Thyroid gland (tissue), 4 donors: ENCODE measurements at regions of chrX and their contacts with region 1.

Region 1: DNA sequence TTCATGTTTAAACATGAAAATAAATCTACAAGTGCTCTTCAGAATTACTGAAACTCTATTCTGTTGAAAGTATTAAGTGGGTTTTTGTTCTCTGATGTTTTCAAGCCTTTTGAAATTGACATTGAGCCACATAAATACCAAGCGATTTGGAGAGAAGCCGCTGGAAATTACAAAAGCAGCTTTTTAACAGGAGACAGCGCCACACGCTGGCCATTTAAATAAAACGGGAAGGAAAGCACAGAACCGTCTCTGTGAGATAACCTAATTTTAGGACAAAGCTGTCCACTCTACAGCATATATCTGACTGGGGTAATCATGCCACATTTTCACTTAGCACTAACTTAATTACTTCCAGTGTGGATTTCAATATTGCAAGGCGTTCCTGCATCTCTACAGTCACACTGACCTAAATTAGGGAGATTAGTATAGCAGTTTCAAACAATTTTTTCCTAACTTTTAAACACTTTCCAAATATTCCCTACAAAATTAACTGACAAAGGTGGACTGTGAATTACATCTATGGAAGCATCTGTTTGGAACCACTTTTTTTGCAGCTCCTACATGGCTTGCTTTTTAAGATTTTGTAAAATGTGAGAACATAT is 6.8 kb upstream of the ANOS1 start:
- DNase-seq: peak; percentile 50 to 63
- H3K4me3 ChIP-seq: no peak overlapping the region
- H3K27ac ChIP-seq: no peak overlapping the region
- H3K4me1 ChIP-seq: no peaks in the 10 kb centered on the region
- H3K27me3 ChIP-seq: no peaks in the 10 kb centered on the region
- CTCF ChIP-seq: peak in 5 of 6 experiments; percentile 21 to 66 (median 48)
- POLR2A ChIP-seq: no peak

Region 2: DNA sequence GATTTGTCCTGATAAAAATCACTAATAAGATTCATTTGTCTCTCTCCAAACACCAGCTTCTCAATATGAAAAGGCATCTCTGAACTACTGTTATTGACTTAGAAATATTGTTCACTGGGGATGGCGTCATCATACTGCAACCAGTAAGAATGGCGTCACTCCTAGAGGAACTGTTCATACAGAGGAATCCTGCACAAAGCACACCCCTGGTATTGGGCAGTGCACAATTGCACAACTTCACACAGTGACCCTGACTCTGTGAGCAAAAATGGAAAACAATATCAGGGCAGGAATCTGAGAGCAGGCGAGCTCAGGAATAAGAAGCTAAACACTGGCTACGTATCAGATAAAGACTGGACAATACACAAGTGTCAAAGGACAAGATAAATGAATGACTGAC is 744.8 kb before region 1 on chrX:
- intact Hi-C with region 1: loop called (anchors 5 kb)
- DNase-seq: no peak
- H3K4me3 ChIP-seq: no peak overlapping the region
- H3K27ac ChIP-seq: no peak overlapping the region
- H3K4me1 ChIP-seq: peaks cover 9 to 10% of the 10 kb centered on the region in 2 donors
- H3K27me3 ChIP-seq: no peaks in the 10 kb centered on the region
- CTCF ChIP-seq: no peak
- POLR2A ChIP-seq: no peak

Region 3: GRCh38 chrX:8579602-8580001 is 159.1 kb before region 1 on chrX:
- intact Hi-C with region 1: no loop called
- DNase-seq: no peak
- H3K4me3 ChIP-seq: no peak overlapping the region
- H3K27ac ChIP-seq: no peak overlapping the region
- H3K4me1 ChIP-seq: no peaks in the 10 kb centered on the region
- H3K27me3 ChIP-seq: no peaks in the 10 kb centered on the region
- CTCF ChIP-seq: no peak
- POLR2A ChIP-seq: no peak

Region 4: GRCh38 chrX:8879750-8880149 is 141.1 kb after region 1 on chrX:
- intact Hi-C with region 1: no loop called
- DNase-seq: peak; percentile 14 to 37
- H3K4me3 ChIP-seq: no peak overlapping the region
- H3K27ac ChIP-seq: no peak overlapping the region
- H3K4me1 ChIP-seq: no peaks in the 10 kb centered on the region
- H3K27me3 ChIP-seq: no peaks in the 10 kb centered on the region
- CTCF ChIP-seq: peak in 4 of 6 experiments; percentile 15 to 51 (median 39)
- POLR2A ChIP-seq: no peak

Region 5: GRCh38 chrX:8988446-8988845 is 249.8 kb after region 1 on chrX:
- intact Hi-C with region 1: no loop called
- DNase-seq: peak; percentile 3 to 10
- H3K4me3 ChIP-seq: no peak overlapping the region
- H3K27ac ChIP-seq: no peak overlapping the region
- H3K4me1 ChIP-seq: no peaks in the 10 kb centered on the region
- H3K27me3 ChIP-seq: no peaks in the 10 kb centered on the region
- CTCF ChIP-seq: no peak
- POLR2A ChIP-seq: no peak

Region 6: DNA sequence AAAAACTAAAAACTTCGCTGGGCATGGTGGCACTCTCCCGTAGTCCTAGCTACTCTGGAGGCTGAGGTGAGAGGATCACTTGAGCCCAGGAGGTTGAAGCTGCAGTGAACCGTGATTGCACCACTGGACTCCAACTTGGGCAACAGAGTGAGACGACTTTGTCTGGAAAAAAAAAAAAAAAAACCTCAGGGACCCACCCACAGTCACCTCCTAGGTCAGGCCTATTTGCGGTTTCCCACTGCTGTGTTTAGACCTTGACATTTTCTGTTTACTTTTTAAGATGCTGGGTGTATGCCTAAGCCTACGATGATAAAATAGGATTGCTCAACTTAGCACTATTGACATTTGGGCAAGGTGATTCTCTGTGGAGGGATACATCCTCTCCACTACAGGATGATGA is 528.7 kb after region 1 on chrX:
- intact Hi-C with region 1: no loop called
- DNase-seq: no peak
- H3K4me3 ChIP-seq: no peak overlapping the region
- H3K27ac ChIP-seq: no peak overlapping the region
- H3K4me1 ChIP-seq: no peaks in the 10 kb centered on the region
- H3K27me3 ChIP-seq: no peaks in the 10 kb centered on the region
- CTCF ChIP-seq: no peak
- POLR2A ChIP-seq: no peak